K562 (cell line): ENCODE measurements at regions of chr10 and their contacts with region 1.

Region 1: GRCh38 chr10:60834401-60834800 is 56.1 kb downstream of the CDK1 start:
- DNase-seq: no peak
- ATAC-seq: no peak
- H3K4me3 ChIP-seq: no peak overlapping the region
- H3K27ac ChIP-seq: no peak overlapping the region
- H3K4me1 ChIP-seq: no peaks in the 10 kb centered on the region; a peak in 2 of 5 replicates
- H3K27me3 ChIP-seq: no peaks in the 10 kb centered on the region
- CTCF ChIP-seq: no peak
- EP300 ChIP-seq: no peak
- POLR2A ChIP-seq: no peak
- RAD21 ChIP-seq: no peak

Region 2: DNA sequence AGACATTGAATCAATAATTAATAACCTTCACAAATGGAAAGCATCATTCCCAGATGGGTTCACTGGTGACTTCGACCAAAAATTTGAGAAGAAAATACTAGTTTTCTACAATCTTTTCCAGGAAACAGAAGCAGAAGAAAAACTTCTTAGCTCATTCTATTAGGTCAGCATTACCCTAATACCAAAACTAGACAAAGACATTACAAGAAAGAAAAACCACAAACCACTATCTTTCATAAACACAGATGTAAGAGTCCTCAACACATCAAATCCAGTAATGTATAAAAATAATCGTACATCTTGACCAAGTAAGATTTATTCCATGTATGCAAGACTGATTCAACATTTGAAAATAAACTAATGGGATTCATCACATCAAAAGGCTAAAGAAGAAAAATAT is 120.2 kb before region 1 on chr10:
- CTCF ChIA-PET with region 1: no interaction called
- POLR2A ChIA-PET with region 1: no interaction called
- in situ Hi-C with region 1: no loop called
- intact Hi-C with region 1: no loop called
- DNase-seq: no peak
- ATAC-seq: no peak
- H3K4me3 ChIP-seq: no peak overlapping the region
- H3K27ac ChIP-seq: no peak overlapping the region
- H3K4me1 ChIP-seq: no peaks in the 10 kb centered on the region
- H3K27me3 ChIP-seq: no peaks in the 10 kb centered on the region
- CTCF ChIP-seq: no peak
- EP300 ChIP-seq: no peak
- POLR2A ChIP-seq: no peak
- RAD21 ChIP-seq: no peak

Region 3: GRCh38 chr10:60848126-60848525 is 13.7 kb after region 1 on chr10:
- CTCF ChIA-PET with region 1: no interaction called
- POLR2A ChIA-PET with region 1: interaction called, 11 read pairs
- in situ Hi-C with region 1: no loop called
- intact Hi-C with region 1: no loop called
- DNase-seq: no peak
- ATAC-seq: no peak
- H3K4me3 ChIP-seq: no peak overlapping the region
- H3K27ac ChIP-seq: no peak overlapping the region
- H3K4me1 ChIP-seq: no peaks in the 10 kb centered on the region
- H3K27me3 ChIP-seq: peaks cover 0 to 2% of the 10 kb centered on the region in 2 experiments; a peak in 1 of 5 replicates
- CTCF ChIP-seq: no peak
- EP300 ChIP-seq: no peak
- POLR2A ChIP-seq: no peak
- RAD21 ChIP-seq: no peak

Region 4: GRCh38 chr10:60892571-60892970 is 58.2 kb after region 1 on chr10:
- CTCF ChIA-PET with region 1: no interaction called
- POLR2A ChIA-PET with region 1: no interaction called
- in situ Hi-C with region 1: no loop called
- intact Hi-C with region 1: no loop called
- DNase-seq: no peak
- ATAC-seq: no peak
- H3K4me3 ChIP-seq: no peak overlapping the region
- H3K27ac ChIP-seq: no peak overlapping the region
- H3K4me1 ChIP-seq: no peaks in the 10 kb centered on the region
- H3K27me3 ChIP-seq: no peaks in the 10 kb centered on the region
- CTCF ChIP-seq: no peak
- EP300 ChIP-seq: no peak
- POLR2A ChIP-seq: no peak
- RAD21 ChIP-seq: no peak